Caco-2 (cell line): ENCODE measurements at regions of chr1 and their contacts with region 1.

Region 1: GRCh38 chr1:13828454-13829151 is 128.6 kb downstream of the PRDM2 start:
- DNase-seq: peak; percentile 53 to 67
- H3K4me3 ChIP-seq: no peak overlapping the region
- H3K4me3 Mint-ChIP-seq: no peak overlapping the region
- H3K27ac Mint-ChIP-seq: no peak overlapping the region
- H3K4me1 ChIP-seq: peaks cover 4% of the 10 kb centered on the region; the same call in 1 of the 2 replicates
- H3K4me1 Mint-ChIP-seq: no peaks in the 10 kb centered on the region
- H3K27me3 ChIP-seq: no peaks in the 10 kb centered on the region
- H3K27me3 Mint-ChIP-seq: no peaks in the 10 kb centered on the region
- CTCF ChIP-seq: peak; percentile 35 to 54

Region 2: DNA sequence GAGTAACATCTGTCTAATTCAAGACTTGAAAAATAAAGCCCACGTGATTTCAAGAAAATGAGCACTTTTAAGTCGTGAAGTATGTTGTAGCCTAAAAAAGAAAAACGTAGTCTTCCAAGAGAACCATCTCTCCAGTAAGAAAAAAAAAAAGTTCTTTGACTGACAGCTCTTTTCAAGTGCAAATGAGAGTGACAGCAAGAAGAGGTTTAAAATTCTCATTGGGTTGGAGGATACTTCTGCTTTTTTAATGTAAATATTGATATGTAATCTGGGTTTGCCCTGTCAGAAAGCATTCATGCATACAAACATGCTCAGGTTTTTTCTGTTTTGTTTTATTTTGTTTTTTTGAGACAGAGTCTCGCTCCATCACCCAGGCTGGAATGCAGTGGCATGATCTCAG is 160.9 kb before region 1 on chr1:
- CTCF ChIA-PET with region 1: no interaction called
- POLR2A ChIA-PET with region 1: no interaction called
- intact Hi-C with region 1: loop called (anchors 5 kb)
- DNase-seq: no peak
- H3K4me3 ChIP-seq: no peak overlapping the region
- H3K4me3 Mint-ChIP-seq: no peak overlapping the region
- H3K27ac Mint-ChIP-seq: no peak overlapping the region
- H3K4me1 ChIP-seq: no peaks in the 10 kb centered on the region
- H3K4me1 Mint-ChIP-seq: no peaks in the 10 kb centered on the region
- H3K27me3 ChIP-seq: no peaks in the 10 kb centered on the region
- H3K27me3 Mint-ChIP-seq: no peaks in the 10 kb centered on the region
- CTCF ChIP-seq: no peak

Region 3: DNA sequence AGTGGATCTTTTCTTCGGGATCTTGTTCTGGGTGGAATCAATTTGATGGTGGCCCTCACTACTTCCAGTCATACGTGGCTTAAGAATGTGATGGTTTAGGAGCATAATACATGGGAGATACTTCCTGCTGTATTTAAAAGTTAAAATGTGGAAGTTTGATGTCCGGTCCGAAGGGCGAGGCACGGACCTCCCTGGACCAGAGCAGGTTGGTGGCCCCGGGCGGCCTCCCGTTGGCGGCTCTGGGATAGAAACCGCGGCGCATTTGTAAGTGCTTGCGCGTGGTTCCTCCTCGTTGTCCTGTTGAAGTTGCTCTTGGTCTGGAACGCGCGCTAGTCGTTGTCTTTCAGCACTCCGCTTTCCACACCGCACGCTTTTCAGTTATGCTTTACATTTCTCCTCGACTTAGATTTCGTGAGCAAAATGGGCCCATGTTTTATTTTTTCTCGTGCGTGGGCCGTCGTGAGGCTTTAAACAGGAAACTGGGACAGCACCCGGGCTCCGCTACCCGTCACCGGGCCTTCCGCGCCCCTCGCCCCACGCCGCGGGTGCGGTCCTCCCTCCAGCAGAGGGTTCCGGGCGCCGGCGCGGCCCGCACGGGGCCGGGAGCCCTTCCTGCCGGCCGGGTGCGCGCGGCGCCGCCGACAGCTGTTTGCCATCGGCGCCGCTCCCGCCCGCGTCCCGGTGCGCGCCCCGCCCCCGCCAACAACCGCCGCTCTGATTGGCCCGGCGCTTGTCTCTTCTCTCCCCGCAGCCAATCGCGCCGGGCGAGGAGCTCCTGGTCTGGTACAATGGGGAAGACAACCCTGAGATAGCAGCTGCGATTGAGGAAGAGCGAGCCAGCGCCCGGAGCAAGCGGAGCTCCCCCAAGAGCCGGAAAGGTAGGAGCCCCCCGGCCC is 79.7 kb before region 1 on chr1:
- CTCF ChIA-PET with region 1: no interaction called
- POLR2A ChIA-PET with region 1: no interaction called
- intact Hi-C with region 1: no loop called
- DNase-seq: peak; percentile 94 to 95
- H3K4me3 ChIP-seq: peak overlapping the region; percentile 83
- H3K4me3 Mint-ChIP-seq: peak overlapping the region; percentile 84
- H3K27ac Mint-ChIP-seq: peak overlapping the region; percentile 84
- H3K4me1 ChIP-seq: 0 out of 2 replicates have a peak, but pooled peaks cover 7% of the 10 kb centered on the region
- H3K4me1 Mint-ChIP-seq: peaks cover 9% of the 10 kb centered on the region
- H3K27me3 ChIP-seq: no peaks in the 10 kb centered on the region
- H3K27me3 Mint-ChIP-seq: no peaks in the 10 kb centered on the region
- CTCF ChIP-seq: peak in 1 of 2 experiments; percentile 2

Region 4: DNA sequence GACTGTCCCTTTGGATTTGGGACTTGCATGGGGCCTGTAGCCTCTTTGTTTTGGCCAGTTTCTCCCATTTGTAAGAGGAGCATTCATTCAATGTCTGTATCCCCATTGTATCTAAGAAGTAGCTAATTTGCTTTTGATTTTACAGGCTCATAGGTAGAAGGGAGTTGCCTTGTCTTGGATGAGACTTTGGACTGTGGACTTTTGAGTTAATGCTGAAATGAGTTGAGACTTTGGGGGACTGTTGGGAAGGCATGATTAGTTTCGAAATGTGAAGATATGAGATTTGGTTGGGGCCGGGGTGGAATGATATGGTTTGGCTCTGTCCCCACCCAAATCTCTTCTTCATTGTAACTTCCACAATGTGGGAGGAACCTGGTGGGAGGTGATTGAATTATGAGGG is 23.1 kb after region 1 on chr1:
- CTCF ChIA-PET with region 1: no interaction called
- POLR2A ChIA-PET with region 1: no interaction called
- intact Hi-C with region 1: no loop called
- DNase-seq: no peak
- H3K4me3 ChIP-seq: no peak overlapping the region
- H3K4me3 Mint-ChIP-seq: no peak overlapping the region
- H3K27ac Mint-ChIP-seq: no peak overlapping the region
- H3K4me1 ChIP-seq: no peaks in the 10 kb centered on the region
- H3K4me1 Mint-ChIP-seq: no peaks in the 10 kb centered on the region
- H3K27me3 ChIP-seq: no peaks in the 10 kb centered on the region
- H3K27me3 Mint-ChIP-seq: no peaks in the 10 kb centered on the region
- CTCF ChIP-seq: no peak

Region 5: DNA sequence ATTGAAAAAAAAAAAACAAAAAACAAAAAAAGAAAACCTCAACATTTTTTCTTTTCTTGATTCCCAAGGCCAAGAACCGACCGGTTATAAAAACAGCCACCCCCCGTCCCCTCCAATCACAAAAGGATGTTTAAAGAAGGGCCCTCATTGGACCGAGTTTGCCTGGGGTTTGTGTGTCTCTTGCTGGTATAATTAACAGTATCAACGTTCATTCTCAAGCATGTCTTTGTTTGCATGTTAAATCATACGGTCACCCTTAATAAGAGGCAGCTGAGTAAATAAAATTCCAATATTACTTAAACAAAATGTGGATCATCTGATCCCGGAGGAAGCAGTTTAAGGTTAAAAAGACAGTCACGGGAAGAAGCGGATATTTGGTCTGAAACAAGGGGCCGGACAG is 72.4 kb after region 1 on chr1:
- CTCF ChIA-PET with region 1: no interaction called
- POLR2A ChIA-PET with region 1: no interaction called
- intact Hi-C with region 1: no loop called
- DNase-seq: no peak
- H3K4me3 ChIP-seq: no peak overlapping the region
- H3K4me3 Mint-ChIP-seq: no peak overlapping the region
- H3K27ac Mint-ChIP-seq: no peak overlapping the region
- H3K4me1 ChIP-seq: no peaks in the 10 kb centered on the region
- H3K4me1 Mint-ChIP-seq: no peaks in the 10 kb centered on the region
- H3K27me3 ChIP-seq: no peaks in the 10 kb centered on the region
- H3K27me3 Mint-ChIP-seq: peaks cover 2% of the 10 kb centered on the region
- CTCF ChIP-seq: no peak

Region 6: DNA sequence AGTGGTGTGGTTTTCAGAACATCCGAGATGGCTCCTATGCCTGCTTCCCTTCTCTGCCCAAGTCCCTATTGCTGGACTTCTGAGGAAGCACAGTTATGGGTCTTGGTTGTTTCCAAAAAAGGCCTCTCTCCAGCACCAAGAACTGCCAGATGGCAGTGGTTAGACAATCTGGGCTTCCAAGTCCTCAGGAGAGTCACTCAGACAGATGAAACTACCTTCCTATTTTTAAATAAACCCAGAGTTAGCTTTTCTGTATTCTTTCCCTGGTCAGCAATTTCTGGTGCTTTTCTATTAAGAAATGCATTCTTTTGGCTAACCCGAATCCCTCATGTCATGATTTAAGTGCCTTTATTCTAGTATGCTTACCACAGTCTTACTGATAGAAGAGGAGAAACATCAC is 117.3 kb after region 1 on chr1:
- CTCF ChIA-PET with region 1: no interaction called
- POLR2A ChIA-PET with region 1: no interaction called
- intact Hi-C with region 1: no loop called
- DNase-seq: no peak
- H3K4me3 ChIP-seq: no peak overlapping the region
- H3K4me3 Mint-ChIP-seq: no peak overlapping the region
- H3K27ac Mint-ChIP-seq: no peak overlapping the region
- H3K4me1 ChIP-seq: no peaks in the 10 kb centered on the region
- H3K4me1 Mint-ChIP-seq: no peaks in the 10 kb centered on the region
- H3K27me3 ChIP-seq: no peaks in the 10 kb centered on the region
- H3K27me3 Mint-ChIP-seq: peaks cover 7% of the 10 kb centered on the region
- CTCF ChIP-seq: no peak

Region 7: GRCh38 chr1:13960375-13960987 is 131.9 kb after region 1 on chr1:
- CTCF ChIA-PET with region 1: interaction called, 3 read pairs
- POLR2A ChIA-PET with region 1: no interaction called
- intact Hi-C with region 1: loop called (anchors 1 kb)
- DNase-seq: peak; percentile 54 to 68
- H3K4me3 ChIP-seq: no peak overlapping the region
- H3K4me3 Mint-ChIP-seq: no peak overlapping the region
- H3K27ac Mint-ChIP-seq: no peak overlapping the region
- H3K4me1 ChIP-seq: no peaks in the 10 kb centered on the region
- H3K4me1 Mint-ChIP-seq: no peaks in the 10 kb centered on the region
- H3K27me3 ChIP-seq: no peaks in the 10 kb centered on the region
- H3K27me3 Mint-ChIP-seq: peaks cover 10% of the 10 kb centered on the region
- CTCF ChIP-seq: peak; percentile 74 to 86